Astrocyte of the cerebellum (primary cell): ENCODE measurements at regions of chr20 and their contacts with region 1.

Region 1: DNA sequence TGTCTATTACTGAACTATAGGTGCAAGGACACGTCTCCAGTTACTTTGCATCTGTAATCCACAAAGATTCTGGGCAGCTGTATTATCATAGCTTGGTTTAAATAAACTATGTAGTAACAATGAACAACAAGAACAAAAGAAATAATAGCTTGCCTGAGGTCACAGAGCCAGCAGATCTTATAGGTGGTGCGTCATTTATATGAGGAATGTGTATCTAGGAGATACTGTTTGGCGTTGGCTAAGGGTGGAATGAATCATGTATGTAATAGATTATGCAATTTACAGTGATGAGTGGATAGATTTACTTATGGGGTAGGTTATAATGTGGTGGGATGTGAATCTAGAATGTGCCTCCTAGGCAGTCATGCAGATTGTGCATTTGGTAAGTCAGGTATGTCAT is 42.8 kb downstream of the HNF4A start:
- DNase-seq: peak; percentile 8
- H3K4me3 ChIP-seq: no peak overlapping the region
- CTCF ChIP-seq: no peak

Region 2: GRCh38 chr20:44615169-44615791 is 217.0 kb after region 1 on chr20:
- in situ Hi-C with region 1: loop called (anchors 5 kb)
- DNase-seq: no peak
- H3K4me3 ChIP-seq: no peak overlapping the region
- CTCF ChIP-seq: no peak

Region 3: DNA sequence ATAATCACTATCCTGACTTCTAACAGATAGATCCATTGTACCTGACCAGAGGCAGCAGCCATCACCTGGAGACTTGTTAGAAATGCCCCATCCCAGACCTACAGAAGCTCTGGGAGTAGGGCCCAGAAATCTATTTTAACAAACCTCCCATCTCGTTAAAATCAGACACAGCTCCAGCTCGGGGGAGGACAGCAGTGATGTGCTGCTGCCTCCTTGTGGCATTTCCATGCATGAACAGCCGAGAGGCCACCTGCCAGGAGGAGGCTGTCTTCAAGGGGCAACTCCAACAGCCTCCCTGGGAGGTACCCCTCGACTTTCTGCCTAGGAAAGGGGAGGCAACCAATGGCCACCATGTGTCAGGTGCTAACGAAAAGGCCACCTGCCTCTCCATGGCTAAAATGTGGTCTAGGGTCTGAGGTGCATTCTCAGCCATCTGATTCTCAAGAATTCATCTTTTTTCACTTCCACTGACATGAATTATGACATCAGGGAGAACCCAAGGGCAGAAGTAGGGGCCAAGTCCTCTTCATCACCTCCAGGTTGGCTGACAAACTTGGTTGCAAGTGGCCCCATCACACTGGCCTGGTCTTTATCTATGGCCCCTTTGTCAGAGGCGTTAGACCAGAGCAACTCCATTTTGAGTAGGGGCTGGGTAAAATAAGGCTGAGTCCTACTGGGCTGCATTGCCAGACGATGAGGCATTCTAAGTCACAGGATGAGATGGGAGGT is 335.2 kb after region 1 on chr20:
- in situ Hi-C with region 1: loop called (anchors 10 kb)
- DNase-seq: peak; percentile 49
- H3K4me3 ChIP-seq: no peak overlapping the region
- CTCF ChIP-seq: peak; percentile 95